HepG2 (cell line): ENCODE measurements at regions of chr16 and their contacts with region 1.

Region 1: DNA sequence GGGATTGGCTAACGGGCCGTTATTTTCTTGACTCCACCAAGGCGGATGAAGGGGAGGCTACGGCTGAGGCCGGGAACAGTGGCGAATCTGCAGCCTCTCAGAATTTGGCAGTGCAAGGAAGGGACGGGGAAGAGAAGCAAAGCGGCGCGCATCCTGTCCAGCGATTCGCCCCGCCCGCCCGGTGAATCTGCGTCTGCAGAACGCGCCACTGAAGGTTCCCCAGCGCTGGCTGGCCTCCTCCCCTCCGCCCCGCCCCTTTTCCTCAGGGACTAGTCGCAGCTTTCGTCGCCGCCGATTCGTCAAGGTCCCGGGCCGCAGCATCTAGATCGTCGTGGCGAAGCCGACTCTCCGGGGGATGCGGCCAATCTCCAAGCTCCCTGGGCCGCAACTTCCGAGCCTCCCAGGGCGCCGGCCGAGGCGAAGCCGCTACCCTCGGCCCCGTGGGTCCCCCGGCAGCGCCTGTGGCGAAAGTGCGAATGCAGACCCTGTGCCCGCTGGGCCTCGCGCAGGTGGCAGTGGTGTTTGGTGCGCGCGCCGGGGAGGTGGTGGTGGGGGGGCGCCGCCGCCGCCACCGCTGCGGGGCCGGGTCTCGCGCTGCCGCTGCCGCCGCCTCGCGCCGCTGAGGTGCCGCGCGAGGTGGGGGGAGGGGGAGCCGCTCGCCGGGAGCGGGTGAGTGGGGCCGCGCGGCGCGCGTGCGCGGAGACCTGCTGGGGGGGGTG is at the start of gene SETD1A:
- DNase-seq: peak; percentile 93
- ATAC-seq: peak; percentile 65
- H3K4me3 ChIP-seq: peak within 1 kb of the TSS; percentile 84 to 98 (median 93)
- H3K27ac ChIP-seq: peak within 1 kb of the TSS; percentile 97
- H3K4me1 ChIP-seq: peaks cover 56% of the 10 kb centered on the region
- H3K27me3 ChIP-seq: no peaks in the 10 kb centered on the region; a peak in 1 of 5 replicates
- CTCF ChIP-seq: 0 out of 2 replicates have a peak, but pooled peaks have one; percentile 4
- EP300 ChIP-seq: peak in 1 of 2 experiments; percentile 35; a peak in 2 of 4 replicates
- POLR2A ChIP-seq: no peak; a peak in 2 of 4 replicates
- RAD21 ChIP-seq: peak; percentile 47; the same call in 1 of the 2 replicates
- total RNA-seq, gene SETD1A: 3.6 and 5.6 TPM in 2 replicates

Region 2: DNA sequence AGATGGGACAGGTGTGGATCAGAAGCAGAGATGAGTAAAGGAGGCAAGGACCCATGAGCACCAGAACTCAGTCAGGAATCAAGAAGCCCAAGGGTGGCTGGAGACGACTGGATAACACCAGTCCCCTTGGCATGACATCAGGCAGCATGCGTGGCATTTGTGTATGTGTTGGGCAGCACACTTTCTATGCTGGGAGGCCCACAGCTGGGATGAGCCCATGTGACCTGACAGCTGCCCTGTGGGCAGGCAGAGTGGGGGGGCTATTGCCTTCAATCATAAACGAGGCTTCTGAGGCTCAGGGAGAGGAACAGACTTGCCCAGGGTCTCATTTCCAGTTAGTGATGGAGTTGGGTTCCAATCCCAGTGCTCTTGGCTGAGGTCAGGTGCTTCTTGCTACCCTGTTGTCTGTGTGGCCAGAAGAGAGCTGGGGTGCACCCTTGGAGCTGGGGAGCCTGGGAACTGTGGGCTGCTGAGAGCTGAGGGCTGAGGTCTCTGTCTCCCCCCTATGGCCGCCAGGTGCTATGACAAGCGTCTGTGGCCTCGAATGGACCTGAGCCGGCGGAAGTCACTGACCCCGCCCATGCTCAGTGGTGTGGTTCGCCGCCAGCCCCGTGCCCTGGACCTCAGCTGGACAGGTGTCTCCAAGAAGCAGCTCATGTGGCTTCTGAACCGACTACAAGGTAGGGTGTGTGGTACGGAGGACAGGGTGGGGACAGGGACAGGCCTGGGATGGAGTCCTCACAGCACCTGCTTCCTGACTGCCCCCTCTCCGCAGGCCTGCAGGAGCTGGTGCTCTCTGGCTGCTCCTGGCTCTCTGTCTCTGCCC is 15.8 kb before region 1 on chr16:
- CTCF ChIA-PET with region 1: interaction called, 4 read pairs
- POLR2A ChIA-PET with region 1: interaction called, 20 read pairs
- in situ Hi-C with region 1: no loop called
- intact Hi-C with region 1: no loop called
- DNase-seq: peak; percentile 80
- ATAC-seq: peak; percentile 95
- H3K4me3 ChIP-seq: peak overlapping the region in 2 of 3 experiments; percentile 32 to 54; a peak in 3 of 6 replicates
- H3K27ac ChIP-seq: peak overlapping the region; percentile 37
- H3K4me1 ChIP-seq: peaks cover 17% of the 10 kb centered on the region
- H3K27me3 ChIP-seq: no peaks in the 10 kb centered on the region
- CTCF ChIP-seq: peak; percentile 99
- EP300 ChIP-seq: no peak
- POLR2A ChIP-seq: no peak
- RAD21 ChIP-seq: peak; percentile 92

Region 3: GRCh38 chr16:31142109-31143010 is 184.7 kb after region 1 on chr16:
- CTCF ChIA-PET with region 1: no interaction called
- POLR2A ChIA-PET with region 1: interaction called, 13 read pairs
- in situ Hi-C with region 1: no loop called
- intact Hi-C with region 1: loop called (anchors 10 kb)
- DNase-seq: peak; percentile 98
- ATAC-seq: peak; percentile 74
- H3K4me3 ChIP-seq: peak overlapping the region; percentile 39 to 77 (median 64)
- H3K27ac ChIP-seq: peak overlapping the region; percentile 80
- H3K4me1 ChIP-seq: peaks cover 65% of the 10 kb centered on the region
- H3K27me3 ChIP-seq: peaks cover 0 to 14% of the 10 kb centered on the region in 2 experiments; a peak in 3 of 5 replicates
- CTCF ChIP-seq: peak; percentile 98
- EP300 ChIP-seq: peak; percentile 26 to 27; a peak in 1 of 4 replicates
- POLR2A ChIP-seq: no peak
- RAD21 ChIP-seq: peak; percentile 99

Region 4: GRCh38 chr16:31301708-31302400 is 344.2 kb after region 1 on chr16:
- CTCF ChIA-PET with region 1: no interaction called
- POLR2A ChIA-PET with region 1: no interaction called
- in situ Hi-C with region 1: no loop called
- intact Hi-C with region 1: no loop called
- DNase-seq: no peak
- ATAC-seq: peak; percentile 45; the same call in 1 of the 3 replicates
- H3K4me3 ChIP-seq: no peak overlapping the region
- H3K27ac ChIP-seq: no peak overlapping the region
- H3K4me1 ChIP-seq: no peaks in the 10 kb centered on the region
- H3K27me3 ChIP-seq: 0 out of 5 replicates have a peak, but pooled peaks cover 0 to 6% of the 10 kb centered on the region in 2 experiments
- CTCF ChIP-seq: no peak
- EP300 ChIP-seq: no peak
- POLR2A ChIP-seq: no peak
- RAD21 ChIP-seq: no peak